HCT116 (cell line): ENCODE measurements at regions of chr22 and their contacts with region 1.

Region 1: GRCh38 chr22:46367707-46368191 is 32.2 kb downstream of the TRMU start:
- DNase-seq: peak; percentile 29
- ATAC-seq: peak; percentile 94
- H3K4me3 ChIP-seq: no peak overlapping the region
- H3K27ac ChIP-seq: no peak overlapping the region
- H3K4me1 ChIP-seq: peaks cover 0 to 12% of the 10 kb centered on the region in 2 experiments; a peak in 2 of 4 replicates
- H3K27me3 ChIP-seq: no peaks in the 10 kb centered on the region
- CTCF ChIP-seq: peak; percentile 85 to 96 (median 90)
- POLR2A ChIP-seq: no peak
- RAD21 ChIP-seq: peak; percentile 93

Region 2: DNA sequence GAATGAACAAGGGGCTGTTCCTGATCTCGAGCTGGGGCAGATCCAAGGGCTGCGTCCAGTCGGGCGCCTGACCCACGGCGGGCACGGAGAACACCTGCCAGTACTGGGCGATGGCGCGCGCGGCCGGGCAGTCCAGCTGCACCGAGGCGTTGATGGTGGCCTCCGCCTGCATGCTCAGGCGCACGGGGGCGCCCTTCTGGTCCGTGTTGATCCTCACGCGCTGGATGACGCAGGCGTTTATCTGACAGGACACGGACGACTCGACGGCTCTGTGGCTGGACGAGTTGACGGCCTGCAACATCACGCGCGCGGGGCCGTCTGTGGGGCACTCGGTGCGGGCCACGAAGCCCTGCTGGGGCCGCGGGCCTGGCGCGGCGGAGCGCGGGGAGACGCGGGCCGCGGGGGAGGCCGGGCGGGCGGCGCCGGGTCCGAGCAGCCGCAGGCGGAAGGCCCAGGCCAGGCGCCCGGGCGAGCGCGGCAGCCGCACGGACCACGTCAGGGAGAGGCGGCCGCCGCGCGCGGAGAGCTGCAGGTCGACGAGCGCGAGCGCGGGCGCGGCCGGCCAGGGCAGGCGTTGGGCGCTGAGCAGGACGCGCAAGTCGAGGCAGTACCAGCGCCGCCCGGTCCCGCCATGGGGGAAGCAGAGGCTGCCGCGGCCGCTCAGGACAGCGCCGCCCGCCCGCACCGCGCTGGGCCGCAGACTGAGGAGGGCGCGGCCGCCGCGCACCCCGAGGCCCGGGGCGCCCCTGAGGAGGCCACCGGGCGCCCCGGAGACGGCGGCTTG is 105.1 kb before region 1 on chr22:
- CTCF ChIA-PET with region 1: no interaction called
- POLR2A ChIA-PET with region 1: no interaction called
- RAD21 ChIA-PET with region 1: no interaction called
- intact Hi-C with region 1: no loop called
- DNase-seq: no peak
- ATAC-seq: no peak
- H3K4me3 ChIP-seq: no peak overlapping the region
- H3K27ac ChIP-seq: no peak overlapping the region
- H3K4me1 ChIP-seq: peaks cover 8 to 12% of the 10 kb centered on the region in 2 experiments
- H3K27me3 ChIP-seq: no peaks in the 10 kb centered on the region
- CTCF ChIP-seq: no peak
- POLR2A ChIP-seq: no peak
- RAD21 ChIP-seq: no peak

Region 3: GRCh38 chr22:46355371-46355995 is 12.3 kb before region 1 on chr22:
- CTCF ChIA-PET with region 1: interaction called, 13 read pairs
- POLR2A ChIA-PET with region 1: no interaction called
- RAD21 ChIA-PET with region 1: interaction called in 1 of 2 experiments, 3 read pairs
- intact Hi-C with region 1: no loop called
- DNase-seq: no peak
- ATAC-seq: peak; percentile 79
- H3K4me3 ChIP-seq: no peak overlapping the region
- H3K27ac ChIP-seq: no peak overlapping the region; the same call in 1 of the 2 replicates
- H3K4me1 ChIP-seq: peaks cover 13 to 14% of the 10 kb centered on the region in 2 experiments
- H3K27me3 ChIP-seq: no peaks in the 10 kb centered on the region
- CTCF ChIP-seq: peak; percentile 73 to 91 (median 85)
- POLR2A ChIP-seq: no peak
- RAD21 ChIP-seq: peak; percentile 92

Region 4: GRCh38 chr22:46547883-46548244 is 180.1 kb after region 1 on chr22:
- CTCF ChIA-PET with region 1: interaction called, 146 read pairs
- POLR2A ChIA-PET with region 1: interaction called, 15 read pairs
- RAD21 ChIA-PET with region 1: interaction called, 21 to 31 read pairs
- intact Hi-C with region 1: no loop called
- DNase-seq: no peak
- ATAC-seq: no peak
- H3K4me3 ChIP-seq: no peak overlapping the region
- H3K27ac ChIP-seq: no peak overlapping the region
- H3K4me1 ChIP-seq: peaks cover 0 to 15% of the 10 kb centered on the region in 2 experiments; a peak in 2 of 4 replicates
- H3K27me3 ChIP-seq: no peaks in the 10 kb centered on the region
- CTCF ChIP-seq: no peak
- POLR2A ChIP-seq: no peak
- RAD21 ChIP-seq: no peak